Naive thymus-derived CD4-positive, alpha-beta T cell (primary cell): ENCODE measurements at regions of chr18 and their contacts with region 1.

Region 1: GRCh38 chr18:12990967-12991838 is at the start of gene CEP192:
- DNase-seq: peak; percentile 90 to 99 (median 97)
- ATAC-seq: peak; percentile 99
- H3K4me3 ChIP-seq: peak within 1 kb of the TSS; percentile 85
- H3K4me3 Mint-ChIP-seq: peak within 1 kb of the TSS in 9 of 10 donors; percentile 90 to 99 (median 98)
- H3K27ac ChIP-seq: peak within 1 kb of the TSS; percentile 82
- H3K27ac Mint-ChIP-seq: peak within 1 kb of the TSS; percentile 88 to 97 (median 93)
- H3K4me1 ChIP-seq: peaks cover 27 to 29% of the 10 kb centered on the region in 2 donors
- H3K4me1 Mint-ChIP-seq: peaks cover 10 to 29% (median 20%) of the 10 kb centered on the region in 7 donors
- H3K27me3 ChIP-seq: no peaks in the 10 kb centered on the region
- H3K27me3 Mint-ChIP-seq: peaks cover 0 to 1% (median 0%) of the 10 kb centered on the region in 5 donors
- total RNA-seq, gene CEP192: 30.9 to 45.0 (median 39.7) TPM

Region 2: GRCh38 chr18:12645254-12646203 is 345.7 kb before region 1 on chr18:
- CTCF ChIA-PET with region 1: no interaction called
- POLR2A ChIA-PET with region 1: no interaction called
- intact Hi-C with region 1: no loop called
- DNase-seq: no peak
- ATAC-seq: no peak
- H3K4me3 ChIP-seq: no peak overlapping the region
- H3K4me3 Mint-ChIP-seq: no peak overlapping the region
- H3K27ac ChIP-seq: no peak overlapping the region
- H3K27ac Mint-ChIP-seq: no peak overlapping the region
- H3K4me1 ChIP-seq: no peaks in the 10 kb centered on the region
- H3K4me1 Mint-ChIP-seq: peaks cover 0 to 2% (median 0%) of the 10 kb centered on the region in 7 donors
- H3K27me3 ChIP-seq: no peaks in the 10 kb centered on the region
- H3K27me3 Mint-ChIP-seq: peaks cover 16 to 41% (median 18%) of the 10 kb centered on the region in 5 donors

Region 3: DNA sequence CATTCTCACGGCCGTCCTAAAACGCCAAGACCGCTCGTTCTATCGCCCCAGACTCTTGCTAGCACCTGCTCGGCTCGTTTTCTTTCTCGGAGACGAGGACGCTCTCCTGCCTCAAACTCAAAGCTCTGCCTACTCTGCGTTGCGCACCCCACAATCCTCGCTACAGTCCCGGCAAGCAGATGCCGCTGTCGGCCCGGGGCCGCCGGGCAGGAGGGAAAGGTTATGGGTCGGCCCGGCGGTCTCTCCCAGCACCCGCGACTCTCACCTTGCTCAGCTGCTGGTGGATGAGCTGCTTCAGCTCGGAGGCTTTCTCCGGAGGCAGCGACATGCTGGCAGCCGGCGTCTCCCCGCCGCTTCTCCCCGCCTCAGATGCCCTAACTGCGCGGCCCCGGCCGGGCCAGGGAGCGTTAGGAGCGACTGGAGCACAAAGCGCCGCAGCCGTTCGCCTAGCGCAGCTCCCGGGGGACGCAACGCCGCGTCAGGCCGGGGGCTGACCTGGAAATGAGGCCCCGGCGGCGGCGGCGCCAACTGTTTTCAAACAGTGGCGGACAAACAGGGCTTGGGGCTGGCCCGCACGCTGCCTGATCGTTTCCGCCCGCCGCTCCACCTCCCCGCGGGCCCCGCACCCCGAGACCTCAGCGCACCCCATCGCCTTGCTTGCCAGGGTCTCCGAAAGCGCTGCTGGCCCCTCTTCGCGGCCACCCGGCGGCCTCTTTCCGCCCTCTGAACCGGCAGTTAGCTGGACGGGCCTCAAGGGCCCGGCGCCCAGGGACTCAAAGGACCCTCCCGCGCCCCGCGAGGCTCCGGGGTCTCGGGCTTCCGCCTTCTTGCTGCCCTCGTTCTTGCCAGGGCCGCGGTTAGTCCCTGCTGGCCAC is 288.7 kb before region 1 on chr18 and contains the starts of genes CEP76 and PSMG2:
- CTCF ChIA-PET with region 1: no interaction called
- POLR2A ChIA-PET with region 1: interaction called, 3 read pairs
- intact Hi-C with region 1: loop called (anchors 1 kb)
- DNase-seq: peak; percentile 77 to 88 (median 84)
- ATAC-seq: peak; percentile 89
- H3K4me3 ChIP-seq: peak within 1 kb of the TSS; percentile 97
- H3K4me3 Mint-ChIP-seq: peak within 1 kb of the TSS; percentile 92 to 99 (median 98)
- H3K27ac ChIP-seq: peak within 1 kb of the TSS; percentile 96
- H3K27ac Mint-ChIP-seq: peak within 1 kb of the TSS; percentile 91 to 100 (median 96)
- H3K4me1 ChIP-seq: peaks cover 17 to 20% of the 10 kb centered on the region in 2 donors
- H3K4me1 Mint-ChIP-seq: peaks cover 36 to 63% (median 50%) of the 10 kb centered on the region in 7 donors
- H3K27me3 ChIP-seq: no peaks in the 10 kb centered on the region
- H3K27me3 Mint-ChIP-seq: no peaks in the 10 kb centered on the region
- total RNA-seq, gene CEP76: 6.9 to 13.2 (median 11.1) TPM
- total RNA-seq, gene PSMG2: 49.9 to 104 (median 59.9) TPM

Region 4: DNA sequence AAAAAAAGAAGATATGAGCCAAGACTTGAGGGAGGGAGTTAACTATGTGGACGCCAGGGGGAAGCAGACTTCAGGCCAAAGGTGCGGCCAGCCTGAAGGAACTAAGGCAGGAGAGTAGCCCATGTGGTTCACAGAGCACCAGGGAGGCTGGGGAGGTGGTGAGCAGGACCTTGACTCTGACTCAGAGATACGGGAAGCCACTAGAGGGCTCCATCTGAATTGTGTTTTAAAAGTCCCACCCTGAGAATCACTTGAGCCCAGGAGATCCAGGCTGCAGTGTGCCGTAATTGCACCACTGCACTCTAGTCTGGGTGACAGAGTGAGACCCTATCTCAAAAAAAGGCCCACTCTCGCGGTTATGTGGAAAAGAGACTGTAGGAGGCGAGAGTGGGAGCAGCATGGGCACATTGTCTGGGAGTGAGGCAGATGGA is 12.3 kb after region 1 on chr18:
- CTCF ChIA-PET with region 1: no interaction called
- POLR2A ChIA-PET with region 1: interaction called, 3 read pairs
- intact Hi-C with region 1: loop called in 1 of 2 experiments (anchors 1 kb)
- DNase-seq: peak in 2 of 9 donors; percentile 1 to 10
- ATAC-seq: peak; percentile 36
- H3K4me3 ChIP-seq: no peak overlapping the region
- H3K4me3 Mint-ChIP-seq: no peak overlapping the region
- H3K27ac ChIP-seq: no peak overlapping the region
- H3K27ac Mint-ChIP-seq: no peak overlapping the region
- H3K4me1 ChIP-seq: no peaks in the 10 kb centered on the region
- H3K4me1 Mint-ChIP-seq: peaks cover 4 to 32% (median 19%) of the 10 kb centered on the region in 7 donors
- H3K27me3 ChIP-seq: no peaks in the 10 kb centered on the region
- H3K27me3 Mint-ChIP-seq: no peaks in the 10 kb centered on the region

Region 5: DNA sequence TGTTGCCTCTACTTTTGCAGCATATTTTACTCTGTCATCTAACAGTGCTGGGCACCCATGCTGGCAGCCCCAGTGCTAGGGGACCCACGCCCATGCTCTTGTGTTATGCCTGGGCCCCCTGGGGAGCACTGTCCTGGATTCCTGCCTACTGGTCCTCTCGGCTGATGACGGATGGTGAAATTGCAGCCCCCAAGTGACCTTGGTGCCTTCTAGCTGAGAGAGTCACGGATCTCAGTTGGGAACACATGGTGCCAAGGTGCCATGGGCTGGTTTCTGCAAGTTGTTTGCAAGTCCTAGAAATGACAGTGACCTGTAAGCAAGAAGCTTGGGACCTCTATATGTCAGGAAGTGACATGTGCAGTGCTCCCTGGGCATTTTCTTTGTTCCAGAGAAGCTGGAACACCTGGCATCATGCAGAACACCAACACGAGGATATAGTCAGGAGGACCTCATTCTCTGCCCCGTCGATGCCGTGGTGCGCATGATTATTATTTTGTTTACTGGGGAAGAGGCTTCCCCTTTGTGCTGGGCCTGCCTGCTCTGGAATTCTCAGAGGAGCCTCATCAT is 414.9 kb after region 1 on chr18:
- CTCF ChIA-PET with region 1: no interaction called
- POLR2A ChIA-PET with region 1: no interaction called
- intact Hi-C with region 1: no loop called
- DNase-seq: no peak
- ATAC-seq: no peak
- H3K4me3 ChIP-seq: no peak overlapping the region
- H3K4me3 Mint-ChIP-seq: no peak overlapping the region
- H3K27ac ChIP-seq: no peak overlapping the region
- H3K27ac Mint-ChIP-seq: peak overlapping the region in 2 of 9 donors; percentile 12 to 32
- H3K4me1 ChIP-seq: no peaks in the 10 kb centered on the region
- H3K4me1 Mint-ChIP-seq: peaks cover 0 to 32% (median 16%) of the 10 kb centered on the region in 7 donors
- H3K27me3 ChIP-seq: no peaks in the 10 kb centered on the region
- H3K27me3 Mint-ChIP-seq: no peaks in the 10 kb centered on the region

Region 6: GRCh38 chr18:13629841-13630715 is 638.9 kb after region 1 on chr18:
- CTCF ChIA-PET with region 1: no interaction called
- POLR2A ChIA-PET with region 1: no interaction called
- intact Hi-C with region 1: loop called in 1 of 2 experiments (anchors 1 kb)
- DNase-seq: peak in 8 of 9 donors; percentile 34 to 62 (median 56)
- ATAC-seq: peak; percentile 87
- H3K4me3 ChIP-seq: no peak overlapping the region
- H3K4me3 Mint-ChIP-seq: no peak overlapping the region
- H3K27ac ChIP-seq: no peak overlapping the region
- H3K27ac Mint-ChIP-seq: peak overlapping the region in 5 of 9 donors; percentile 1 to 58 (median 18)
- H3K4me1 ChIP-seq: no peaks in the 10 kb centered on the region
- H3K4me1 Mint-ChIP-seq: peaks cover 2 to 26% (median 14%) of the 10 kb centered on the region in 7 donors
- H3K27me3 ChIP-seq: no peaks in the 10 kb centered on the region
- H3K27me3 Mint-ChIP-seq: no peaks in the 10 kb centered on the region